ENCODE measurements at regions of chr6 and their contacts with region 1.

Region 1: GRCh38 chr6:150301846-150302519 is 66.8 kb upstream of the IYD start:
- DNase-seq: no peak
- H3K4me3 Mint-ChIP-seq: no peak overlapping the region
- H3K27ac Mint-ChIP-seq: no peak overlapping the region
- H3K4me1 Mint-ChIP-seq: peaks cover 3% of the 10 kb centered on the region
- H3K27me3 Mint-ChIP-seq: peaks cover 10% of the 10 kb centered on the region

Region 2: DNA sequence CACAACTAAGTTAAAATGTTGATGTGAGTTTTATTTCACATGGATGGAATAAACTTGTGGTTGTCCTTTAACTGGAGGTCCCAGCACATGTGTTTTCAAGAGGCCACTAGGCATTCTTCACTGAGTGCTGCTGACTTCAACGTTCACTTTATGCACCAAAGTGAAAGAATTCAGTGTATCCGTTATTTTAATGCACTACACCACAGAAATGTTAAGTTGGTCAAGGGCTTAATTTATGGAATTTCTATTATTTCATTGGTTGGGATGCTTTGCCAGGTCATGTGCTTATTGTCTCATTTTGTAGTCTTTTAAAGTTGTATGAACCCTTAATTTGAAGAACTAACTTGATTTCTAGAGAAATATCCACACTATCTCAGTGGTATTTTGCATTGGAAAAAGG is 52.7 kb before region 1 on chr6:
- intact Hi-C with region 1: loop called (anchors 5 kb)
- DNase-seq: no peak
- H3K4me3 Mint-ChIP-seq: no peak overlapping the region
- H3K27ac Mint-ChIP-seq: no peak overlapping the region
- H3K4me1 Mint-ChIP-seq: peaks cover 16% of the 10 kb centered on the region
- H3K27me3 Mint-ChIP-seq: peaks cover 11% of the 10 kb centered on the region

Measured in activated CD4-positive, alpha-beta T cell treated with anti-CD3 and anti-CD28 coated beads, Interleukin-2, amount 10 ng/mL, durations not matched to agents 24 days and 14 days (primary cell).